ENCODE measurements at regions of chr21 and their contacts with region 1.

Region 1: DNA sequence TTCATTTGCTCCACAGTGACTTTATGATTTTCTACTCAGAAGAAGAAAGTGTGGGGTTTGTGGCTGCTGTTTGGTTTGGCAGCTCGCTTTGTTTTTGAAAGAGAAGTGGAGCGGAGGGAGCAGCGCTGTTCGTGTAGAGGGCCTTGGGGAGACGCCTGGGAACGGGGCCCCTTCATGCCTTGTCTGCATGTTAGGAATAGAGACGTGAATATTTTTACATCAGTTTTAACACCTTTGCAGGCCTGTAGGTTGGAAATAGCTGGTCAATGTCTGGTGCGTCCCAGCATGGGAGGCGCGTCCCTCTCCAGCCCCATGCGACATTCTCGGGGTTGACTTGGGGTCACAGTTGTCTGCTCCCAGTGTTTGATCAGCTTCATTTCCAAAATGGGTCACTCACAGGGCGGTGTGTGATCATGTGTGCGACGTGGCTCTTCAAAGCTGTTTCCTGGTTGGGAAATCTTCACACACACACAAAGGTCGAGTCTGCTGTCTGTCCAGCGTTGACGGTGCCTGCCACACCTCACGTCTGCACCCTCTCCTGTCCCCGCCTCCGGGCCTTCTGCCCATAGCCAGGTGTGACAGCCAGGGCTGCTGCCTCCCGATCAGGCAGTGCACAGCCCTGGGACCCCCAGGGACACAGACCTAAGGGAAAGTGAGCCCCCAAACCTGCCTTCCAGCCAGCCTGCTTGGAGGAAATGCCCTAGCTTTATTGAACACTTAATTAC is 149.2 kb downstream of the PSMG1 start:
- DNase-seq: no peak
- H3K4me3 ChIP-seq: no peak overlapping the region
- H3K27ac ChIP-seq: peak overlapping the region; percentile 8
- H3K4me1 ChIP-seq: peaks cover 28% of the 10 kb centered on the region
- H3K27me3 ChIP-seq: no peaks in the 10 kb centered on the region
- CTCF ChIP-seq: no peak

Region 2: DNA sequence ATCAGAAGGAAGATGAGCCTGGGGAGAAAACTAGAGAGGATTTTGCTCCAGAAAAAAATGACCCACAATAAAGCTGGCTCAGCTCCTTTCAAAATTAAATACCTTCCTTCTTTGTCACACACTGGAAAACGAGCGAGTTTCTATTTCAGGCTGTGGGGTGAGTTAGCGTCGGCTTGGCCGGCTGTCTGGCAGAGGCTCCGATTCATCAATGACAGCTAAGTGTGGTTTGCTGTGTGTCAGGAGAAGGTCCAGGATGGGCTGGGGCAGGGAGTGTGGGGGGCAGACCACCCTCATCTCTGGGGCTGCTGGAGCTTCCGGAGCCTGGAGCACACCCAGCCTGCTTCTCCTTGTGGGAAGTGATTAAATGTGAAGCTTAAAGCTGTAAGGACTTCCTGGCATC is 108.1 kb before region 1 on chr21:
- CTCF ChIA-PET with region 1: no interaction called
- dilution Hi-C with region 1: loop called (anchors 5 kb)
- in situ Hi-C with region 1: no loop called
- intact Hi-C with region 1: no loop called
- DNase-seq: peak; percentile 84
- H3K4me3 ChIP-seq: peak overlapping the region; percentile 10 to 28 (median 21)
- H3K27ac ChIP-seq: peak overlapping the region; percentile 11
- H3K4me1 ChIP-seq: peaks cover 11% of the 10 kb centered on the region
- H3K27me3 ChIP-seq: no peaks in the 10 kb centered on the region
- CTCF ChIP-seq: no peak

Region 3: DNA sequence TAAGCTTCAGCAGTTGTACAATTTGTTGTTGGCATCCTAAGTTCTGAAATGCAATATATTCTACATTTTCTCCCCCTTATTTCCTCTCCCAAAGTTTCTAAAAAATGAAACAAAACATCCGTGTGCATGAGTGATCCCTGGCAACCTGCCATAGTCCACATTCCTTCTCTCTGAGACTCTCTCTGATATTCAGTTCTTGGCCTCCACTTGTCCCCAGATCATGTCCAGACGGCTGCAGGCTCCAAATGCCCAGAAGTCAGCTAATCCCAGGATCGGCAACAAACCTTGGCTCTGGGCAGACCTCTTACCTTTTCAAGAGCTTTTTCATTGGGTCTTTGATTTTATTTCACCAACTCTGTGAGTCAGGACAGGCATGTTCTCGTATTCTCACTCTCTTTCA is 40.5 kb before region 1 on chr21:
- CTCF ChIA-PET with region 1: no interaction called
- dilution Hi-C with region 1: loop called (anchors 5 kb)
- in situ Hi-C with region 1: no loop called
- intact Hi-C with region 1: no loop called
- DNase-seq: peak; percentile 92
- H3K4me3 ChIP-seq: peak overlapping the region in 1 of 3 experiments; percentile 3
- H3K27ac ChIP-seq: peak overlapping the region; percentile 86
- H3K4me1 ChIP-seq: peaks cover 40% of the 10 kb centered on the region
- H3K27me3 ChIP-seq: no peaks in the 10 kb centered on the region
- CTCF ChIP-seq: no peak

Region 4: DNA sequence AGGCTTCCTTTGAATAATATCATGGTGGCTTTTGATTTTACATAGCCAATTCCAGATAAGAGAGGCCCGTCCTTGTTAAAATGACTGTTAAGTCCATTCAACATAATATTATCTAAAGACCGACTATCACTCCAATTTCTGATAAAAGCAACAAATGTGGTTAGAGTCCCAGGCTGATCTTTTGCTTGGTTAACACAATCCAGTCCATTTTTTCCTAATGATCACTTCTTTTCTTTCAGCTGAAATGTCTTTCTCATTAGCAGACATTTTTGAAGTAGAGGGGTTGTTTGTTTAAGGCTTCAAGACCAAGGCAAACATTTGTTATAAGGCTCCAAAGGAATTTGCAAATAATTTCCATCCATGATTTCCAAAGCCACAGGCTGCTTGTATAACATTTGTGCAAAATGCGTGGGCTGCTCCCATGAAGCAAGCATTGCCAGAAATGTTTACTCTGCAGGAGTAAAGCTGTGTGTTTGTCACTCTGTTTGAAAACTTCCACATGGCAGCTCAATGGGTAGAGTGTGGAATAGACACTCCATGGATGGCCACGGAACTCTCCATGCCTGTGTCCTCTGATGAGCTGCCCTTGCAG is 37.7 kb after region 1 on chr21:
- CTCF ChIA-PET with region 1: no interaction called
- dilution Hi-C with region 1: loop called (anchors 5 kb)
- in situ Hi-C with region 1: no loop called
- intact Hi-C with region 1: no loop called
- DNase-seq: no peak
- H3K4me3 ChIP-seq: no peak overlapping the region
- H3K27ac ChIP-seq: no peak overlapping the region
- H3K4me1 ChIP-seq: no peaks in the 10 kb centered on the region
- H3K27me3 ChIP-seq: no peaks in the 10 kb centered on the region
- CTCF ChIP-seq: no peak

Region 5: DNA sequence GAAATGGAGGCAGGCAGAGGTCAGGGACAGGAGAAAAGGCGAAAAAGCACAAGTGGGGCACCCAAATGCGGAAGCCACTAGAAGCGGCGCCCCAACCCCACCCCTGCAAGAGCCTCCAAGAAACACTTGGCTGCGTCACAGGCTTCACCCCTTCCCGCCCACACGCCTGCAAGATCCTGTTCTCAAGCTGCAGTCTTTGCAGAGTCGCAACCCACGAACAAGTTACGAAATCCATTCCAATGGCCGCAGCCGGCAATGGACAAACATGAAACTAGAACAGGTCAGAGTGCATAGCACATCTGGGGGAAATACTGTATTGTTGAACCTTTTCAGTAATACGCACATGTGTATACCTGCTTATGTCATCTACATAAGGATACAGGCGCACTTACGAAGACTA is 45.6 kb after region 1 on chr21:
- CTCF ChIA-PET with region 1: no interaction called
- dilution Hi-C with region 1: loop called (anchors 5 kb)
- in situ Hi-C with region 1: no loop called
- intact Hi-C with region 1: loop called (anchors 5 kb)
- DNase-seq: no peak
- H3K4me3 ChIP-seq: no peak overlapping the region
- H3K27ac ChIP-seq: no peak overlapping the region
- H3K4me1 ChIP-seq: peaks cover 11% of the 10 kb centered on the region
- H3K27me3 ChIP-seq: no peaks in the 10 kb centered on the region
- CTCF ChIP-seq: no peak

Region 6: DNA sequence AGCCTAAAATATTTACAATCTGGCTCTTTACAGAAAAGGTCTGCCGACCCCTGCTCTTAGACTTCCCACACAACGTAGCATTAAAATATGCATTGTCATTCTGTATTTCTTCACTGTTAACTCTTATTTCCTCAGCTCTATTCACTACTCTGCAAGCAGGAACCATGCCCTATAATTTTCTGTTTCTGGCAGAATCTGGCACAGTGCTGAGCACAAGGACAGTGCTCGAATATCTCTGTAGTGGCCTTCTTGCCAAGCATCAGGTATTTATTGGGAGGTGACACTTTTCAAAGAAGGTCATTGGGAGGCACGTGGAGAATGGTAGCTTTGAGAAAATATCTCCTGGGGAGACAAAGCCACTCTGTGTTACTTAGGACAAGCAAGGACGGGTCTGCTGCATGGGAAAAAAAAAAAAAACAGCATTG is 71.3 kb after region 1 on chr21:
- CTCF ChIA-PET with region 1: no interaction called
- dilution Hi-C with region 1: loop called (anchors 5 kb)
- in situ Hi-C with region 1: no loop called
- intact Hi-C with region 1: no loop called
- DNase-seq: no peak
- H3K4me3 ChIP-seq: no peak overlapping the region
- H3K27ac ChIP-seq: no peak overlapping the region
- H3K4me1 ChIP-seq: no peaks in the 10 kb centered on the region
- H3K27me3 ChIP-seq: no peaks in the 10 kb centered on the region
- CTCF ChIP-seq: no peak

Region 7: GRCh38 chr21:39175154-39175553 is 141.1 kb after region 1 on chr21:
- CTCF ChIA-PET with region 1: no interaction called
- dilution Hi-C with region 1: no loop called
- in situ Hi-C with region 1: no loop called
- intact Hi-C with region 1: no loop called
- DNase-seq: no peak
- H3K4me3 ChIP-seq: no peak overlapping the region
- H3K27ac ChIP-seq: no peak overlapping the region
- H3K4me1 ChIP-seq: no peaks in the 10 kb centered on the region
- H3K27me3 ChIP-seq: no peaks in the 10 kb centered on the region
- CTCF ChIP-seq: peak in 1 of 2 donors; percentile 14